MCF 10A (cell line): ENCODE measurements at regions of chr16 and their contacts with region 1.

Region 1: DNA sequence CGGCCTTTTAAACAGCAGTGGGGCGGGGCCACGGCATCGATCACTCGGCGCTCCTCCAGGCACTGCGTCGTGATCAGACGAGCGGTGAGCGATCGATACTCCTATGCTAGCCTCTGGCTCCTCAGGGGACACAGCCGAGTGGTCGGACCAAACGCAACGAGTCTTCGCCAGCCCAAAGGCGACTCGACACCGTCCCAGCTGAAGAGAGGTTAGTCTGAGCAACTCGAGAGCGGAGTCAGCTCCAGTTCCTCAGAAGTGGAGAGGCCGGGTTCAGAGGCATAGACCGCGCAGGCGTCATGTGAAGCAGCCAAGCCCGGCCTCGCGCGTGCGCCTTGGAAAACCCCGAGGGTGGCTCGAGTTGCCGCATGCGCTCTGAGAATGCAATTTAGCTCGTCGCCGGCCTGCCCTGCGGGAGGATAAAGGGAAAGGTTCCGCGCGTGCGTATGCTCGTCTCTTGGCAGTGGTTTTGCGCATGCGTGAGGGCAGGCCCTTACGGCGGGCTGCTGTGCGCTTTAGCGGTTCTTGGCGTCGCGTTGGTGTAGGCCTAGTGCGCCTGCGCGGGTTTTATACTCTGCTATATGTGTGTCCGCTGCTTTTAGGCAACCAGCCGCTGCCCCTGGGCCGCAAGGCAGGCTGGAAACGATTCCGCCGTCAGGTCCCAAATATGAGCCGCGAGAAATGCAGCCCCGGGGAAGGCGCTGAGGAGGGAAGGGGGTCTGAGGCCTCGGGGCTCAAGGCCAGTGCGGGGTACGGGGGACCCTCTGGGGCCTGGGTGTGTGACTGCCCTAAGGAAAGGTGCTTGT is at the start of gene KDM8:
- DNase-seq: peak; percentile 99
- H3K4me3 Mint-ChIP-seq: peak within 1 kb of the TSS; percentile 95
- H3K27ac Mint-ChIP-seq: peak within 1 kb of the TSS; percentile 100
- H3K4me1 Mint-ChIP-seq: peaks cover 10% of the 10 kb centered on the region
- H3K27me3 Mint-ChIP-seq: no peaks in the 10 kb centered on the region
- CTCF ChIP-seq: no peak
- total RNA-seq, gene KDM8: 3.7 and 4.1 TPM in 2 replicates

Region 2: DNA sequence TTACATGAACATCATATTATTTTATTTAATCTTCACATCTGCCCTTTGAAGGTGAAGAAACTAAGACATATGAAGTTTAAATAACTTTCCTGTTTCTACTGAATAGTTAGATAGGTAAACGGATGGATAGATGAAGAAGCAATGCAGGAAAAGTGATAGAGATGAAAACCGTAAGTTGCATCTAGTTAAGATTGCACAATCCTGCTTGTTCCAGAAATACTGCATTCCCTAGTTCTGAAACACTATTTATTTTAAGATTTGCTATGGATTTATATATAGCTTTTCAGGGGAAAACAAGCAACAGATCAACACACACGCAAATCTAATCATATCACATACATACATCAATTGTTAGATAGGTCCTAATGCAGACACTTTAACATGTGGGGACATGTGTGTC is 649.6 kb before region 1 on chr16:
- CTCF ChIA-PET with region 1: no interaction called
- POLR2A ChIA-PET with region 1: no interaction called
- intact Hi-C with region 1: no loop called
- DNase-seq: no peak
- H3K4me3 Mint-ChIP-seq: no peak overlapping the region
- H3K27ac Mint-ChIP-seq: no peak overlapping the region
- H3K4me1 Mint-ChIP-seq: no peaks in the 10 kb centered on the region
- H3K27me3 Mint-ChIP-seq: no peaks in the 10 kb centered on the region
- CTCF ChIP-seq: no peak

Region 3: GRCh38 chr16:27169511-27170071 is 34.0 kb before region 1 on chr16:
- CTCF ChIA-PET with region 1: no interaction called
- POLR2A ChIA-PET with region 1: interaction called, 4 read pairs
- intact Hi-C with region 1: loop called (anchors 2 kb)
- DNase-seq: peak; percentile 23
- H3K4me3 Mint-ChIP-seq: no peak overlapping the region
- H3K27ac Mint-ChIP-seq: no peak overlapping the region
- H3K4me1 Mint-ChIP-seq: peaks cover under 1% of the 10 kb centered on the region
- H3K27me3 Mint-ChIP-seq: no peaks in the 10 kb centered on the region
- CTCF ChIP-seq: peak; percentile 12

Region 4: DNA sequence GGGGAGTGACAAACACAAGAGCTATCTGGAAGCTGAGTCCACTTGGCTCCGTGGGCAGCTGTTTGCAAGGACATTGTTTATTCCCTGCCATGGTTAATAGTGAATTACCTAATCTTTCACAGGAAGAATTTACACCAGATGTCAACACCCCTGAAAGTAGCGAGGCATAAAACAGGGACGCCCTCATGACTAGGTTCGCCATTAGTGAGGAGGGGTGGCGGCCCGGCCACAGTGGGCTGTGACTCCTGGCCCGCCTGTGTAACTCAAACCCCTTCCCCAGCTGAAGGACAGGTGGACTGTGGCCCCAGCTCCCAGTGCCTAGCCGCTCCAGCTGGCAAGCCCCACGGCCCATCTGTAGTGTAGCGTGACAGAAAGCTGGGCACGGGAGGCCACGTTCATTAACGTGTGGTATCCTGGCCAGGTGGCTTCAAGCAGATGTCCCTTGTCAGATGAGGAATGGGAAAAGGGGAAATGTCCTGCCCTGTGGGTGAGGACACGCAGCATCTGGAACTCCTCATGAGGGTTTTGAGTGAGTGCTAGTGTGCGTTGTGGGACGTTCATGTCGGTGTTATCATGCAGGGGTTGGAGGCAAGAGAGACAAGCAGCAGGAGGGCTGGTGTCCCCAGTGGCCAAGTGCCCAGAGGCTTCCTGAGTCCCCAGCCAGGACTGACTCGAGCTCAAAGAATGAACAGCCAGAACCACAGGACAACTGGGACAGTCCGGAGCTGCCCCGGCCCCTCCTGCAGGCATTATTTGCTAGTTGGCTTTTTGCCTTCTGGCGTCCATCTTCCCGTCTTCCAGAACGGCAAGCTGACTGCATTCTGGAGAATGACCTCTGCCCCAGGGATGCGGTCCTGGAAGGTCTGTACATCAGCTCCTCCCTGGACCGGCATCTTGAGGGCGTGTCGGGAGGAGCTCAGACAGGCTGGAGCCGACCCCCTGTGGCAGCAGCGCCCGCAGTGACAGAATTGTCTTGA is 18.9 kb after region 1 on chr16:
- CTCF ChIA-PET with region 1: interaction called, 4 read pairs
- POLR2A ChIA-PET with region 1: interaction called, 11 read pairs
- intact Hi-C with region 1: no loop called
- DNase-seq: no peak
- H3K4me3 Mint-ChIP-seq: no peak overlapping the region
- H3K27ac Mint-ChIP-seq: no peak overlapping the region
- H3K4me1 Mint-ChIP-seq: no peaks in the 10 kb centered on the region
- H3K27me3 Mint-ChIP-seq: no peaks in the 10 kb centered on the region
- CTCF ChIP-seq: no peak

Region 5: GRCh38 chr16:27355610-27356009 is 152.0 kb after region 1 on chr16:
- CTCF ChIA-PET with region 1: no interaction called
- POLR2A ChIA-PET with region 1: no interaction called
- intact Hi-C with region 1: no loop called
- DNase-seq: peak; percentile 52
- H3K4me3 Mint-ChIP-seq: no peak overlapping the region
- H3K27ac Mint-ChIP-seq: no peak overlapping the region
- H3K4me1 Mint-ChIP-seq: no peaks in the 10 kb centered on the region
- H3K27me3 Mint-ChIP-seq: no peaks in the 10 kb centered on the region
- CTCF ChIP-seq: peak; percentile 24